ENCODE measurements at regions of chr4 and their contacts with region 1.

Region 1: GRCh38 chr4:41281038-41281634 is 24.4 kb downstream of the UCHL1 start:
- DNase-seq: no peak
- H3K4me3 Mint-ChIP-seq: no peak overlapping the region
- H3K27ac Mint-ChIP-seq: no peak overlapping the region
- H3K4me1 Mint-ChIP-seq: no peaks in the 10 kb centered on the region
- H3K27me3 Mint-ChIP-seq: peaks cover 6% of the 10 kb centered on the region

Region 2: DNA sequence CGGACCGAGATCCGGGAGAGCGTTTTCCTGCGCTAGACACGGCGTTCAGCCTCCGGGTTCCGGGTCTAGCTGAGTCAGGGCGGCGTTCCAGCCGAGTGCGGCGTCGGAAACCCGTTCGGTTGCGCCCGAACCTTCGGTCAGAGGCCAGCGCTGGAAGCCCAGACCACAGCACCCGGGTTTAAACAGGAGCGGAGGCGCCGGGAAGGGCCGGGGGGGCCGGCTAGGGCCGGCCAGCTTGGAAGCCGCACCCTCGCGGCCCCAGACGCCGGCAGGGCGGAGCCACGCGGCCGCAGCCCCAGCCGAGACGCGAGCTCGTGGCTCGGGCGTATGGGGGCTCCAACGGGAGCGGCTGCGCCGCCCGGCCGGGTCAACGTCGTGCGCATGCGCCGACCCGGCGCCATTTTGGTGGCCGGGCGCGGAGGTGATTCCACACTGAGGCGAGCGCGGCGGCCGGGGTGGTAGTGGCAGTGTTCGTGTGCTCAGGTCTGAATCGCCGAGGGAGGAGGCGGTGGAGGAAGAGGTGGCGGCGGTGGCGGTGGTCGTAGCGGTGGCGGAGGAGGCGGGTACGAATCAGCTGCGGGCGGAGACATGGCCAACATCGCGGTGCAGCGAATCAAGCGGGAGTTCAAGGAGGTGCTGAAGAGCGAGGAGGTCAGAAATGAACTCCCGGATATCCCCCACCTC is 1583.3 kb before region 1 on chr4 and contains the start of gene UBE2K:
- CTCF ChIA-PET with region 1: no interaction called
- POLR2A ChIA-PET with region 1: no interaction called
- intact Hi-C with region 1: no loop called
- DNase-seq: peak; percentile 92
- H3K4me3 Mint-ChIP-seq: peak within 1 kb of the TSS; percentile 96
- H3K27ac Mint-ChIP-seq: peak within 1 kb of the TSS; percentile 96
- H3K4me1 Mint-ChIP-seq: peaks cover 36% of the 10 kb centered on the region
- H3K27me3 Mint-ChIP-seq: no peaks in the 10 kb centered on the region
- total RNA-seq, gene UBE2K: 81.4 to 83.5 TPM

Region 3: GRCh38 chr4:41448934-41449333 is 167.8 kb after region 1 on chr4:
- CTCF ChIA-PET with region 1: no interaction called
- POLR2A ChIA-PET with region 1: no interaction called
- intact Hi-C with region 1: no loop called
- DNase-seq: no peak
- H3K4me3 Mint-ChIP-seq: no peak overlapping the region
- H3K27ac Mint-ChIP-seq: no peak overlapping the region
- H3K4me1 Mint-ChIP-seq: no peaks in the 10 kb centered on the region
- H3K27me3 Mint-ChIP-seq: no peaks in the 10 kb centered on the region

Region 4: GRCh38 chr4:41644288-41644914 is 363.3 kb after region 1 on chr4:
- CTCF ChIA-PET with region 1: interaction called, 9 read pairs
- POLR2A ChIA-PET with region 1: no interaction called
- intact Hi-C with region 1: loop called (anchors 5 kb)
- DNase-seq: peak; percentile 26
- H3K4me3 Mint-ChIP-seq: no peak overlapping the region
- H3K27ac Mint-ChIP-seq: no peak overlapping the region
- H3K4me1 Mint-ChIP-seq: no peaks in the 10 kb centered on the region
- H3K27me3 Mint-ChIP-seq: peaks cover 15% of the 10 kb centered on the region

Region 5: GRCh38 chr4:41661442-41662076 is 380.4 kb after region 1 on chr4:
- CTCF ChIA-PET with region 1: interaction called, 60 read pairs
- POLR2A ChIA-PET with region 1: no interaction called
- intact Hi-C with region 1: loop called (anchors 1 kb)
- DNase-seq: peak; percentile 57
- H3K4me3 Mint-ChIP-seq: no peak overlapping the region
- H3K27ac Mint-ChIP-seq: no peak overlapping the region
- H3K4me1 Mint-ChIP-seq: no peaks in the 10 kb centered on the region
- H3K27me3 Mint-ChIP-seq: peaks cover 10% of the 10 kb centered on the region

Region 6: GRCh38 chr4:41692717-41693345 is 411.7 kb after region 1 on chr4:
- CTCF ChIA-PET with region 1: interaction called, 3 read pairs
- POLR2A ChIA-PET with region 1: no interaction called
- intact Hi-C with region 1: loop called (anchors 1 kb)
- DNase-seq: peak; percentile 52
- H3K4me3 Mint-ChIP-seq: no peak overlapping the region
- H3K27ac Mint-ChIP-seq: no peak overlapping the region
- H3K4me1 Mint-ChIP-seq: peaks cover 3% of the 10 kb centered on the region
- H3K27me3 Mint-ChIP-seq: peaks cover 3% of the 10 kb centered on the region

Region 7: DNA sequence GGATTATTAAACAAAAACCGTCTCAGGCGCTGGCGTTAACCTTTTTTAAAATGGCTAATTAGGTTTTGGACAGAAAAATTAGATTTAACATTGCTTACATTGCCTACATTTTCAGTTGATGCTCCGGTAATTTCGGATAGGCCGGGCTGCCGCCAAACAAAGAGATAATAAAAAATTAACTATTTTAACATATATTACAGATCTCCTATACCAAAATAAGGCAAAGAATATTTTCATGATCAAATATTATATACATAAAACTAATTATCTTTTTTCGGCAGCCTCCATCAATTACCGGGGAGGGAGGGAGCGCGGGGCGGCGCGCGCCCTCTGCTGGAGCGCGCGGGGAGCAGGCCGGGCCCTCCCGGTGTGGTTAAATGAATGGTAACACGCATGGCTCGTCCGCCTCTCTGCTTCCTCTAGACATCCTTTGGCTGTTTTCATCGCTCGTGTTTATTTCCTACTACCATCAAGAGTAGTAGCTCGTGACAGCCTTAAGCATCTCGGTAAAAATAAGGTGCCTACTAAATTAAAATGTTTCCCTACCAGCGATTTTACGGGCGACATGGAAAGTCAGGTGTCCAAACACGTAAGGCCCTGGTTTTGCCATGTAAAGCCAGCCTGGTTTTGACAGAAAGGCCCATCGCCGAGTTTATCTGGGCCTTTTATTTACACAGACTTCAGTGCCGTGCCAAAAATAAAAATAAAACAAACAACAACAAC is 601.6 kb after region 1 on chr4:
- CTCF ChIA-PET with region 1: interaction called, 24 read pairs
- POLR2A ChIA-PET with region 1: no interaction called
- intact Hi-C with region 1: loop called (anchors 1 kb)
- DNase-seq: peak; percentile 68
- H3K4me3 Mint-ChIP-seq: peak overlapping the region; percentile 38
- H3K27ac Mint-ChIP-seq: no peak overlapping the region
- H3K4me1 Mint-ChIP-seq: peaks cover 21% of the 10 kb centered on the region
- H3K27me3 Mint-ChIP-seq: peaks cover 47% of the 10 kb centered on the region

Region 8: DNA sequence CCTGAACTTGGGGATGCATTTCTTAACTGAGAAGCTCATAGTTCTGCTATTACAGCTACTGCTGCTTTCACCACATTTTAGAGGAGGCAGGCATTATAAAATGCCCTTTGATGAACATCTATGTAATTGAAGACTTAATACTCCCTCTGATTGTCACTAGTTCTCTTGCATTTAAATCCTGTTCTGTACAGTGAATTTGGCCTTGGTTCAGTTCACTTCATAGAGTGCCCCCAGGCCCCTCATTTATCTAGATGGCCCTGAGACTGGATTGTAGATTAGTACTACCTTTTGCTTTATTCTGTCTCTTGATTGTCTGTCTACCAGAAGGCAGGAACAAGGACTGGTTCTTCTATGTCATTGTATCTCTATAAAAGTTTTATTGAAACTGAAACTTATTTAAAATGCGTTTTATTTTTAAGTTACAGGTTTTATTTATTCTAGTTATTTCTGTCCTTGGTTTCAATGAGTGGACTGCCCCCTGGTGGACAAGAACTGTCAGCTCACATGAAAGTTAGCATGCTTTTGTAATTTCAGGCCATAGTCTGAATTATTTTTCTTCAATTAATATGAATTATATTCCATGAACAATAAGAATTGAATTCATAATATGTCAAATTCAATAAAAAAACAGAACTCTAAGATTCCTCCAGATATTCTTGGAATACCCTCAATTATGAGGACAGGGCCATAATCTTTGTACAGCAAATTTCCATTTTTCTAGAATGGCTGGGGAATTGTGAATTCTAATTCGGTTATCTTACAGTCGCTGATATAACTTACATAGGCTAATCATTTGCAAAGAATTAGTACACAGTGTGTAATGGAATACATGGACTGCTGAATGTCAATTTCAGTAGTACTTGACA is 606.9 kb after region 1 on chr4:
- CTCF ChIA-PET with region 1: interaction called, 24 read pairs
- POLR2A ChIA-PET with region 1: no interaction called
- intact Hi-C with region 1: no loop called
- DNase-seq: peak; percentile 48
- H3K4me3 Mint-ChIP-seq: no peak overlapping the region
- H3K27ac Mint-ChIP-seq: no peak overlapping the region
- H3K4me1 Mint-ChIP-seq: no peaks in the 10 kb centered on the region
- H3K27me3 Mint-ChIP-seq: peaks cover 17% of the 10 kb centered on the region